CD4-positive, alpha-beta memory T cell (primary cell): ENCODE measurements at regions of chr12 and their contacts with region 1.

Region 1: GRCh38 chr12:132986001-132986912 is at the start of gene ZNF26:
- DNase-seq: peak; percentile 85 to 90 (median 86)
- H3K4me3 ChIP-seq: peak within 1 kb of the TSS; percentile 58 to 64
- H3K4me3 Mint-ChIP-seq: peak within 1 kb of the TSS; percentile 92 to 98 (median 95)
- H3K27ac ChIP-seq: peak within 1 kb of the TSS; percentile 77
- H3K27ac Mint-ChIP-seq: peak within 1 kb of the TSS; percentile 95 to 97 (median 97)
- H3K4me1 ChIP-seq: peaks cover 22% of the 10 kb centered on the region
- H3K4me1 Mint-ChIP-seq: peaks cover 24 to 48% (median 33%) of the 10 kb centered on the region in 4 donors
- H3K27me3 ChIP-seq: no peaks in the 10 kb centered on the region
- H3K27me3 Mint-ChIP-seq: peaks cover 0 to 3% of the 10 kb centered on the region in 2 donors
- total RNA-seq, gene ZNF26: 25.9 to 28.2 TPM

Region 2: DNA sequence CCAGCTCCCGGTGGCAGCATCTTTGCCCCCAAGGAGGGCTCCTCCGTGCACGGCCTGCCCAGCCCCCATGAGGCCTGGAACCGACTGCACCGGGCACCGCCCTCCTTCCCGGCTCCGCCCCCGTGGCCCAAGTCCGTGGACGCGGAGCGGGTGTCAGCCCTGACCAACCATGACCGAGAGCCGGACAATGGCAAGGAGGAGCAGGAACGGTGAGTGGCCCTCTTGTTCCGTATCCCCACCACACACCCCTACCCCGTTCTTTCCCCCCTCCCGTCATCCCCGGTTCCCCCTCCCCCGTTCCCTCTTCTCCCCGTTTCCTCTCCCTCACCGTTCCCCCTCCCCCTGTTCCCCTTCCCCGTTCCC is 404.2 kb before region 1 on chr12:
- CTCF ChIA-PET with region 1: no interaction called
- POLR2A ChIA-PET with region 1: no interaction called
- intact Hi-C with region 1: no loop called
- DNase-seq: no peak
- H3K4me3 ChIP-seq: no peak overlapping the region
- H3K4me3 Mint-ChIP-seq: no peak overlapping the region
- H3K27ac ChIP-seq: no peak overlapping the region
- H3K27ac Mint-ChIP-seq: no peak overlapping the region
- H3K4me1 ChIP-seq: no peaks in the 10 kb centered on the region
- H3K4me1 Mint-ChIP-seq: peaks cover 0 to 2% (median 0%) of the 10 kb centered on the region in 4 donors
- H3K27me3 ChIP-seq: no peaks in the 10 kb centered on the region
- H3K27me3 Mint-ChIP-seq: no peaks in the 10 kb centered on the region

Region 3: DNA sequence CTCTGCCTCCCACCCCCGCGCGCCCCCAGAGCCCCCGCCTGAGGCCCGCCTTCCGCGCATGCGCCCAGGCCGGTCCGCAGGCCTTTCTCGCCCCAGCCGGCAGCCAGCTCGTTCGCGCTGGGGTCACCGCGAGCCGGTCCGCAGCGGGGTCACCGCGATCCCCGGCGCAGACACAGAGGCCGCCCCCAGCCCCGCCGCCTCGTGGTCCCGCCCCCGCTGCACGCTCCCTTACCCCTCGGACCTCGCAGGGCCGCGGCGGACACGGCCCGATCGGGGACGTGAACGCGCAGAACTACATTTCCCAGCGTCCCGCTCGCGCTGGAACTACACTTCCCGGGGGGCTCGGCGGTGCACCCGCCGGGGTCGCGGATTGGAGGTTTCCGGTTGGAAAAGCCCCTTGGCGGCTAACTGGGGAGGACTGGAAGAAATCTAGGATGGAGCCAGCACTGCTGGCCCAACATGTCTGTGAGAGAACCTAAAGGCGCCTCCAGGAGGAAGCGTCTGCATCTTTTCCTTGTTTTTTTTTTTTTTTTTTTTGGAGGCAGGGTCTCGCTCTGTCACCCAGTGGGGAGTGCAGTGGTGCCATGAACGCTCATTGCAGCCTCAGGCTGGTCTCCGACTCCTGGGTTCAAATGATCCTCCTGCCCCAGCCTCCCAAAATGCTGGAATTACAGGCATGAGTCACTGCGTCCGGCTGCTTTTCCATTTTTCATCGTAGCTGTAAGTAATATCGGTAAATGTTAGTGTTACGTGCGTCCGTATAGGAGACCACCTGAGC is 30.1 kb before region 1 on chr12 and contains the start of gene ZNF605:
- CTCF ChIA-PET with region 1: interaction called, 4 read pairs
- POLR2A ChIA-PET with region 1: interaction called, 19 read pairs
- intact Hi-C with region 1: loop called (anchors 1 kb)
- DNase-seq: peak; percentile 82 to 92 (median 86)
- H3K4me3 ChIP-seq: peak within 1 kb of the TSS; percentile 53 to 97
- H3K4me3 Mint-ChIP-seq: peak within 1 kb of the TSS; percentile 93 to 98 (median 94)
- H3K27ac ChIP-seq: peak within 1 kb of the TSS; percentile 81
- H3K27ac Mint-ChIP-seq: peak within 1 kb of the TSS; percentile 83 to 97 (median 94)
- H3K4me1 ChIP-seq: peaks cover 13% of the 10 kb centered on the region
- H3K4me1 Mint-ChIP-seq: peaks cover 20 to 40% (median 29%) of the 10 kb centered on the region in 4 donors
- H3K27me3 ChIP-seq: no peaks in the 10 kb centered on the region
- H3K27me3 Mint-ChIP-seq: no peaks in the 10 kb centered on the region
- total RNA-seq, gene ZNF605: 16.5 to 17.2 TPM

Region 4: GRCh38 chr12:133023566-133023965 is 37.3 kb after region 1 on chr12:
- CTCF ChIA-PET with region 1: no interaction called
- POLR2A ChIA-PET with region 1: no interaction called
- intact Hi-C with region 1: no loop called
- DNase-seq: no peak
- H3K4me3 ChIP-seq: no peak overlapping the region
- H3K4me3 Mint-ChIP-seq: no peak overlapping the region
- H3K27ac ChIP-seq: no peak overlapping the region
- H3K27ac Mint-ChIP-seq: no peak overlapping the region
- H3K4me1 ChIP-seq: no peaks in the 10 kb centered on the region
- H3K4me1 Mint-ChIP-seq: no peaks in the 10 kb centered on the region
- H3K27me3 ChIP-seq: no peaks in the 10 kb centered on the region
- H3K27me3 Mint-ChIP-seq: no peaks in the 10 kb centered on the region

Region 5: GRCh38 chr12:133130038-133130807 is 144.0 kb after region 1 on chr12 and contains the starts of genes ZNF10 and ZNF891:
- CTCF ChIA-PET with region 1: no interaction called
- POLR2A ChIA-PET with region 1: interaction called, 19 read pairs
- intact Hi-C with region 1: loop called (anchors 1 kb)
- DNase-seq: peak; percentile 95 to 98 (median 98)
- H3K4me3 ChIP-seq: peak within 1 kb of the TSS; percentile 59 to 87
- H3K4me3 Mint-ChIP-seq: peak within 1 kb of the TSS; percentile 87 to 99 (median 95)
- H3K27ac ChIP-seq: peak within 1 kb of the TSS; percentile 98
- H3K27ac Mint-ChIP-seq: peak within 1 kb of the TSS; percentile 92 to 100 (median 99)
- H3K4me1 ChIP-seq: peaks cover 10% of the 10 kb centered on the region
- H3K4me1 Mint-ChIP-seq: peaks cover 11 to 25% (median 19%) of the 10 kb centered on the region in 4 donors
- H3K27me3 ChIP-seq: no peaks in the 10 kb centered on the region
- H3K27me3 Mint-ChIP-seq: no peaks in the 10 kb centered on the region
- total RNA-seq, gene ZNF10: 17.4 to 19.6 TPM
- total RNA-seq, gene ZNF891: 6.2 to 7.3 TPM

Region 6: DNA sequence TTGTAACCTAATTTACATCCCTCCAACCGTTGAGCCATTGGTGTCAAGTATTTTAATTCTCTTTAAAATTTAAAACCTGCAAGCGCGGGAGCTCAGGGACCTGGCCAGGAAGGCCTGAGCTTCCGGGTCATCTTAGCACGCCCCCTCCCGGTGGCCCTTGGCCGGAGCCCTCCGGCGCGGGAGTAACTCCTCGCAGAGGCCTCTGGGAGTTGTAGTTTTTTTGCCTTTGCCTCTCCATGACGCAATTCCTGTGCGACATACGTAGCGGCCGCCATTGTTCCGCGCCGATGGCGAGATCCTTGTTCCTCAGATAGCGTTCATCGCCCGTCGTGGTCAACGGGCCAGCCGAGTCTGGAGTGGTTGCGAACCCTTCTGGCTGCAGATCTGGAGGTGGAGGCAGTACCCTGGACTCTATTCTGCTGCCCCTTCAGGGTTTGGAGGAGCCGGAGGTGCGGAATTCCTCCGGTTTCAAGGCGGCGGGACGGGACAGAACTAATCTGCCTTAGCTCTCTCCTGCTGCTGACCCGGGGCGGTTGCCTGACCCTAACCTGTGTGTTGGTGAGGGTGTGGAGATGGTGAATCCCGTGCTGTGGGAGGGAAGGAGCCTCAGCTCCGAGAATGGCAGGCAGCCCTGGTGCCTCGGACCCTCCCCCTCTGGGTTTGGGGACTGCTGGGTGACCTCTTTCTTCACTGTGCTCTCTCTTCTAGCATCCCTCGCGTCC is 195.1 kb after region 1 on chr12 and contains the start of gene ZNF268:
- CTCF ChIA-PET with region 1: interaction called, 20 read pairs
- POLR2A ChIA-PET with region 1: interaction called, 43 read pairs
- intact Hi-C with region 1: loop called (anchors 1 kb)
- DNase-seq: peak; percentile 84 to 89 (median 85)
- H3K4me3 ChIP-seq: peak within 1 kb of the TSS; percentile 96 to 100
- H3K4me3 Mint-ChIP-seq: peak within 1 kb of the TSS; percentile 89 to 97 (median 94)
- H3K27ac ChIP-seq: peak within 1 kb of the TSS; percentile 73
- H3K27ac Mint-ChIP-seq: peak within 1 kb of the TSS; percentile 91 to 98 (median 96)
- H3K4me1 ChIP-seq: peaks cover 10% of the 10 kb centered on the region
- H3K4me1 Mint-ChIP-seq: peaks cover 19 to 34% (median 23%) of the 10 kb centered on the region in 4 donors
- H3K27me3 ChIP-seq: no peaks in the 10 kb centered on the region
- H3K27me3 Mint-ChIP-seq: no peaks in the 10 kb centered on the region
- total RNA-seq, gene ZNF268: 34.9 to 39.6 TPM